IMR-90 (cell line): ENCODE measurements at regions of chr2 and their contacts with region 1.

Region 1: GRCh38 chr2:29115797-29116781 is 874 bp downstream of the CLIP4 start:
- DNase-seq: peak; percentile 85
- ATAC-seq: peak; percentile 42
- H3K4me3 ChIP-seq: peak overlapping the region; percentile 88
- H3K27ac ChIP-seq: peak overlapping the region; percentile 94
- H3K4me1 ChIP-seq: peaks cover 26% of the 10 kb centered on the region
- H3K27me3 ChIP-seq: no peaks in the 10 kb centered on the region
- CTCF ChIP-seq: no peak
- POLR2A ChIP-seq: peak; percentile 63; the same call in 1 of the 2 replicates
- RAD21 ChIP-seq: no peak

Region 2: DNA sequence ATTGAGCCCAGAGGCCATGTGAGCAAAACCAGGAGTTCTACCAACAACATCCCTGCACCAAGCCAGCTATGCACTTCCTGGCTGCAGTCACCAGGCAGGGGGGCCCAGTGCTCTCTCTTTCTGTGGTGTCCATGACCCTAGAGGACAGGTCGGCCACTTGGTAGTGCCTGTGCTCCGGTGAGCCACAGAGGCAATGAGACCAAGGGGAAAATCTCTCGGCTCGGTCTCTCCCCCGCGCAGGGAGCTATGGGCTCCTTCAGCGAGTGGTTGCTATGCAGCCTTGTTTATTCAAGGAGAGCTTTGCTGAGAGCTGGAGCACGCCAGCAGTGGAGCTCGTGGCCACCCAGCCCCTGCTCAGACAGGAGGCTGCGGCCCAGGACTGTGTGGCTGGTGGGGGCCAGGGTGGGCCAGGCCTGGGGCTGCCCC is 135.1 kb before region 1 on chr2 and contains the start of gene TOGARAM2:
- CTCF ChIA-PET with region 1: no interaction called
- POLR2A ChIA-PET with region 1: no interaction called
- dilution Hi-C with region 1: no loop called
- in situ Hi-C with region 1: no loop called
- intact Hi-C with region 1: loop called (anchors 5 kb)
- DNase-seq: peak; percentile 51
- ATAC-seq: peak; percentile 87
- H3K4me3 ChIP-seq: no peak within 1 kb of the TSS
- H3K27ac ChIP-seq: peak within 1 kb of the TSS; percentile 75; the same call in 1 of the 2 replicates
- H3K4me1 ChIP-seq: peaks cover 20% of the 10 kb centered on the region
- H3K27me3 ChIP-seq: no peaks in the 10 kb centered on the region; the same call in 1 of the 2 replicates
- CTCF ChIP-seq: no peak
- POLR2A ChIP-seq: no peak
- RAD21 ChIP-seq: no peak
- total RNA-seq, gene TOGARAM2: under 0.01 and 0.28 TPM in 2 replicates

Region 3: DNA sequence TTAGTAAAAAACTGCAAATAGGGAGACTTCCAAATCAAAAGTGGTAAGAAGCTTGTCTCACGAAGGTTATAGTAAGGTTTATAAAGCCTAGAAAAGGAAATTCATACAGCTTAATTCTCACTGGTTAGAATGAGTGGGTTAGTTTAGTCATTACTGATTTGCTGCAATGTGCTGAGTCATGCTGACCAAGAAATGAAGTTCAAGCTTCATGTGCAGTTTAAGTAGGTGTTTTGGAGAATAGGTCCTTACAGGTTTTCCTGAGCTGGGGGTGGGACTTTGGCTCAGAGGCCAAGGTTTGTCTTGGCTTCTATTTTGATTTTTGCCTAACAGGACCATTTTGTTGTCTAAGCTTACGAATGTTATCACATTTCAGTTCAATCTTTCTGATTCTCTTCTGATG is 14.2 kb after region 1 on chr2:
- CTCF ChIA-PET with region 1: interaction called, 8 read pairs
- POLR2A ChIA-PET with region 1: interaction called, 11 read pairs
- dilution Hi-C with region 1: no loop called
- in situ Hi-C with region 1: no loop called
- intact Hi-C with region 1: no loop called
- DNase-seq: peak; percentile 91
- ATAC-seq: peak; percentile 93
- H3K4me3 ChIP-seq: no peak overlapping the region
- H3K27ac ChIP-seq: peak overlapping the region; percentile 98
- H3K4me1 ChIP-seq: peaks cover 11% of the 10 kb centered on the region
- H3K27me3 ChIP-seq: no peaks in the 10 kb centered on the region
- CTCF ChIP-seq: no peak
- POLR2A ChIP-seq: no peak
- RAD21 ChIP-seq: no peak